SK-N-SH (cell line): ENCODE measurements at regions of chr6 and their contacts with region 1.

Region 1: DNA sequence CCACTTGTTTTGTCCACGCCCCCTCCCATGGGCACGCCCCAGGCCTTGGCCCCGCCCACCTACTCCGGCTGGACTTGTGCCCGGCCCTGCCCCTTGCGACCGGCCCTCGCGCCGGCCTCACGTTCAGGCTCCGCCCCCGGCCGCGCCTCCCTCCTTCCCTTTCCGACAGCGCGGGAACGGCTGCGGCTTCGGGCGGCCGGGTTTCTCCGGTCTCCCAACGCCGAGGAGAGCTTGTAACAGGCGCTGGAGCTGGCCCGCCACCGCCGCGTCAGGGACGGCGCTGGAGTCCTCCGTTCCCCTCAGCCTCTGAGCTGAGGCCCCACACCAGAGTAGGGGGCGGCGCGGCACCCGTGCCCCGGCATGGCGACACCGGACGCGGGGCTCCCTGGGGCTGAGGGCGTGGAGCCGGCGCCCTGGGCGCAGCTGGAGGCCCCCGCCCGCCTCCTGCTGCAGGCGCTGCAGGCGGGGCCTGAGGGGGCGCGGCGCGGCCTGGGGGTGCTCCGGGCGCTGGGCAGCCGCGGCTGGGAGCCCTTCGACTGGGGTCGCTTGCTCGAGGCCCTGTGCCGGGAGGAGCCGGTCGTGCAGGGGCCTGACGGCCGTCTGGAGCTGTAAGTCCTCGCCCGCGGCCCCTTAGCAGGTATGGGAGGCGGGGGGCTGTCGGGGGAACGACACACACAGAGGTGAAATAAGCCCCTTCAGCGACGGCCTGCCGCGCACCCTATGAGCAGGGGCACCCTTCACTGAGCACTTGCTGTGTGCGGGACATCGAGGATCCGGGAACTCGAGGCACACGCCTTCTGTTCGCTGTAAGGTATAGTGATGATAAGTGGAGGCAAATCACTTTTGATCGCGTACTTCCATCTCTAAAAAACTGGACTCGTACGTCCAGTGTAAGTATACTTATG is at the start of gene FANCE:
- DNase-seq: peak; percentile 98
- H3K4me3 ChIP-seq: peak within 1 kb of the TSS; percentile 64 to 70
- H3K27ac ChIP-seq: no peak within 1 kb of the TSS; a peak in 1 of 4 replicates
- H3K4me1 ChIP-seq: peaks cover 0 to 17% of the 10 kb centered on the region in 2 experiments; a peak in 2 of 4 replicates
- H3K27me3 ChIP-seq: no peaks in the 10 kb centered on the region
- CTCF ChIP-seq: no peak
- EP300 ChIP-seq: no peak
- RAD21 ChIP-seq: no peak
- polyA plus RNA-seq, gene FANCE: 5.8 and 6.5 TPM in 2 replicates

Region 2: GRCh38 chr6:35139908-35140655 is 312.4 kb before region 1 on chr6:
- CTCF ChIA-PET with region 1: no interaction called
- POLR2A ChIA-PET with region 1: no interaction called
- DNase-seq: peak; percentile 70
- H3K4me3 ChIP-seq: peak overlapping the region in 1 of 2 experiments; percentile 14; a peak in 1 of 4 replicates
- H3K27ac ChIP-seq: no peak overlapping the region
- H3K4me1 ChIP-seq: no peaks in the 10 kb centered on the region
- H3K27me3 ChIP-seq: no peaks in the 10 kb centered on the region
- CTCF ChIP-seq: peak; percentile 94
- EP300 ChIP-seq: no peak
- RAD21 ChIP-seq: peak; percentile 99

Region 3: GRCh38 chr6:35297601-35298481 is 154.6 kb before region 1 on chr6 and contains the start of gene DEF6:
- CTCF ChIA-PET with region 1: interaction called, 30 read pairs
- POLR2A ChIA-PET with region 1: no interaction called
- DNase-seq: peak; percentile 49
- H3K4me3 ChIP-seq: no peak within 1 kb of the TSS
- H3K27ac ChIP-seq: no peak within 1 kb of the TSS
- H3K4me1 ChIP-seq: peaks cover 0 to 4% of the 10 kb centered on the region in 2 experiments; a peak in 1 of 4 replicates
- H3K27me3 ChIP-seq: no peaks in the 10 kb centered on the region
- CTCF ChIP-seq: peak; percentile 24; the same call in 1 of the 2 replicates
- EP300 ChIP-seq: no peak
- RAD21 ChIP-seq: peak; percentile 53
- polyA plus RNA-seq, gene DEF6: 0.13 and 0.16 TPM in 2 replicates

Region 4: GRCh38 chr6:35327349-35328027 is 125.0 kb before region 1 on chr6:
- CTCF ChIA-PET with region 1: interaction called, 10 read pairs
- POLR2A ChIA-PET with region 1: no interaction called
- DNase-seq: peak; percentile 69
- H3K4me3 ChIP-seq: no peak overlapping the region
- H3K27ac ChIP-seq: no peak overlapping the region
- H3K4me1 ChIP-seq: no peaks in the 10 kb centered on the region; a peak in 1 of 4 replicates
- H3K27me3 ChIP-seq: no peaks in the 10 kb centered on the region; the same call in 1 of the 2 replicates
- CTCF ChIP-seq: peak; percentile 58
- EP300 ChIP-seq: no peak
- RAD21 ChIP-seq: peak; percentile 67

Region 5: GRCh38 chr6:35406711-35407485 is 45.5 kb before region 1 on chr6:
- CTCF ChIA-PET with region 1: interaction called, 12 read pairs
- POLR2A ChIA-PET with region 1: no interaction called
- DNase-seq: no peak
- H3K4me3 ChIP-seq: no peak overlapping the region
- H3K27ac ChIP-seq: no peak overlapping the region
- H3K4me1 ChIP-seq: peaks cover 0 to 14% of the 10 kb centered on the region in 2 experiments; a peak in 1 of 4 replicates
- H3K27me3 ChIP-seq: no peaks in the 10 kb centered on the region
- CTCF ChIP-seq: no peak
- EP300 ChIP-seq: no peak
- RAD21 ChIP-seq: no peak

Region 6: DNA sequence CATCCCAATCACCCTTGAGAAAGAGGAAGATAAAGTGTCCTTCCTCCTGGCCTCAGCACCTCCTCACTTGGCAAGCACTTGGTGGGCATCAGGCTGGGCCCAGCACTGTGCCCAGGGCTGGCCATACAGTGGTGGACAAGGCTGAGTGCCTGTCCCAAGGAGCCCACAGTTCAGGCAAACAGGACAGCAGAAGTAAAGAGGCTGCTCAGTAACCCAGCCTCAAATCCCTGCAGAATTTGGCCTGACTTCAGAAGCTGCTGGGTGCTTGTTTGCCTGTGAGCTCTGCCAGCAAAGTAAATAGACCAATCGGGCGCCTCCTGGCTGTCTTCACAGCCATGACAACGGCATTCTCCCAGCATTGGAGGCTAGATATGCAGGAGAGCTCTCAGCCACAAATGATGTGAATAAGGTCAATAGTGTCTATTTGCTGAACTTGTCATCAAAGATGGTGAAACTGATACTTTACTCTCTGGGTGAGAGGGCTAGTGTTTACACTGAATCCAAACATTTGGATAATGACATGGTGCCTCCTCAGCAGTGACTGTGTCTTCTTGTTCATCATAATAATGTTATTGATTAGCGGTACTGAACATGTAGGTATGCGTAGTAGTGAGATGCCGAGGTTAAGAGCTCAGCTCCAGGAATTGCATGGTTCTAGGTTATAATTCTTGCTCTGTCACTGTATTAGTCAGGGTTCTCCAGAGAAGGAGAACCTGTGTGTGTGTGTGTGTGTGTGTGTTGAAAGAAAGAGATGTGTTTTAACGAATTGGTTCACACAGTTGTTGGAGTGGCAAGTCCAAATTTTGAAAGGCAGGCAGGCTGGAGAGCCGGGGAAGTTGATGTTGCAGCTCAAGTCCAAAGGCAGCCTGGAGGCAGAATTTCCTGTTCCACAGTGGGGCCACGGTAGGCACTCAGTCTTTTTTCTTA is 37.1 kb before region 1 on chr6:
- CTCF ChIA-PET with region 1: interaction called, 46 read pairs
- POLR2A ChIA-PET with region 1: no interaction called
- DNase-seq: peak; percentile 63
- H3K4me3 ChIP-seq: no peak overlapping the region; a peak in 1 of 4 replicates
- H3K27ac ChIP-seq: peak overlapping the region in 1 of 2 experiments; percentile 36; a peak in 3 of 4 replicates
- H3K4me1 ChIP-seq: peaks cover 0 to 31% of the 10 kb centered on the region in 2 experiments; a peak in 2 of 4 replicates
- H3K27me3 ChIP-seq: no peaks in the 10 kb centered on the region
- CTCF ChIP-seq: peak; percentile 69
- EP300 ChIP-seq: no peak
- RAD21 ChIP-seq: peak; percentile 64

Region 7: DNA sequence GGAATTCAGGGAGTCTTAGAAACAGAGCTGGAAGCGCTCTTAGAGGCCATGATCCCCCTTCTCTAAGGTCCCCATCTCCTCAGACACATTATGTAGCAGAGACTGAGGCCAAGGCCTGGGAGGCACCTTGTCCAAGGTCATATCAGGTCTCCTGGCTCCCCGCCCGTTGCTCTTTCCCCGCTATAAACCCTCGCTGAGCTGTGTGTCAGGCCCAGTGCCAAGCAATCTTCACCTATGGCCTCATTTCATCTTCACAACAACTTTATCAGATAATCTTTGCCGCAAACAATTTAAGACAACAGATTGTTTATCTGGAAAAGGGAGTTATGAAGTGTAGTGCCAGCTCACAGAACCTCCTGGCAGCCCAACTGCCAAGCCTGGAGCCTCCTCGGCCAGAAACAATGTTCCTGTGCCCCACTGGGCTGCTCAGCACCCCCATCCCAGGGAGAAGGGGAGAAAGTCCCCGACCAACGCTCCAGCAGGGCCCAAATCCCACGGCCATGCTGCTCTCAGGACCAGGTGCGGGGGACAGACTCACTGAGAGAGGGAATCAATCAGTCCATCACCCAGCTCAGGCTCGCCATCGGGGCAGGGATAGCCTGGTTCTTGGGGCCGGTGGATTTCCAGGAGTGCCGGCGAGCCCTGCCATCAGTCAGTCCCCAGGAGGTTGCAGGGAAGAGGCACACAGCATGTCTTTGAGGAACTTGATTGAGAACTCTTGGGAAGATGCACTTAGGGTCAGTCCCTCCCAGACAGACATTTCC is 17.2 kb before region 1 on chr6:
- CTCF ChIA-PET with region 1: interaction called, 18 read pairs
- POLR2A ChIA-PET with region 1: no interaction called
- DNase-seq: no peak
- H3K4me3 ChIP-seq: no peak overlapping the region
- H3K27ac ChIP-seq: no peak overlapping the region
- H3K4me1 ChIP-seq: peaks cover 0 to 2% of the 10 kb centered on the region in 2 experiments; a peak in 1 of 4 replicates
- H3K27me3 ChIP-seq: no peaks in the 10 kb centered on the region
- CTCF ChIP-seq: no peak
- EP300 ChIP-seq: no peak
- RAD21 ChIP-seq: no peak

Region 8: DNA sequence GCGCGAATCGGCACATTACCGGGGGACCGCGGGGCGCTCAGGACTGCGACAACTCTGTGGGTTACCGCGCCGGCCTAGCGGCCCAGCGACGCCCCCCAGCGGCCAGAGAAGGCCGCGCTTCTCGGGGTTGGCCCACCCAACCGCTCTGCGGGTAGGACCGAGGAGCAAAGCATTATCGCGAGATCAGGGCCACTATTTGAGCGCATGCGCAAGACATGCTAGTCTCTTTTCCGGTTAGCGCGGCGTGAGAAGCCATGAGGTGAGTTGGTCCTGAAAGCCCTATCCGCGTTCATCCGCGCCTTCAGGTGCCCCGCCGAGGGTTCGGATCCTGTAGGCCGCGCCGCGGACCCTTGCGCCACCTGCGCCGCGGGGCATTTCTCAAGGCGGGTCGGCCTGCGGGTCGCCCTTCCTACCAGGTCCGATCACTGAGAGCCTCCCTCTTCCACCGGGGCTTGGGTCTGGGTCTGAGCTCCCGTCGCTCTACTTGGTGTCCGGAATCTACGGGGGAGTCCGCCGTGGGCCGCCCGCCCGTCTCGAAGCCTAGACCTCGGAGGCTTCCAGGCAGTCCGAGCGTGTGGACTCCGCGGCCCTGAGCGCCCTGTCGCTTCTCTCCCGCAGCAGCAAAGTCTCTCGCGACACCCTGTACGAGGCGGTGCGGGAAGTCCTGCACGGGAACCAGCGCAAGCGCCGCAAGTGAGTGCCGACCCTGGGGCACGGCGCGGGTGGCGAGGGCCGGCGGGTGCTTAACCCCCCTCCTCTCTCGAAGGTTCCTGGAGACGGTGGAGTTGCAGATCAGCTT is 15.9 kb after region 1 on chr6 and contains the start of gene RPL10A:
- CTCF ChIA-PET with region 1: interaction called, 102 read pairs
- POLR2A ChIA-PET with region 1: no interaction called
- DNase-seq: peak; percentile 97
- H3K4me3 ChIP-seq: peak within 1 kb of the TSS; percentile 67 to 90
- H3K27ac ChIP-seq: peak within 1 kb of the TSS; percentile 85 to 89
- H3K4me1 ChIP-seq: peaks cover 23 to 26% of the 10 kb centered on the region in 2 experiments; a peak in 3 of 4 replicates
- H3K27me3 ChIP-seq: no peaks in the 10 kb centered on the region
- CTCF ChIP-seq: peak; percentile 96
- EP300 ChIP-seq: no peak
- RAD21 ChIP-seq: peak; percentile 77
- polyA plus RNA-seq, gene RPL10A: 2,393 and 3,548 TPM in 2 replicates

Region 9: DNA sequence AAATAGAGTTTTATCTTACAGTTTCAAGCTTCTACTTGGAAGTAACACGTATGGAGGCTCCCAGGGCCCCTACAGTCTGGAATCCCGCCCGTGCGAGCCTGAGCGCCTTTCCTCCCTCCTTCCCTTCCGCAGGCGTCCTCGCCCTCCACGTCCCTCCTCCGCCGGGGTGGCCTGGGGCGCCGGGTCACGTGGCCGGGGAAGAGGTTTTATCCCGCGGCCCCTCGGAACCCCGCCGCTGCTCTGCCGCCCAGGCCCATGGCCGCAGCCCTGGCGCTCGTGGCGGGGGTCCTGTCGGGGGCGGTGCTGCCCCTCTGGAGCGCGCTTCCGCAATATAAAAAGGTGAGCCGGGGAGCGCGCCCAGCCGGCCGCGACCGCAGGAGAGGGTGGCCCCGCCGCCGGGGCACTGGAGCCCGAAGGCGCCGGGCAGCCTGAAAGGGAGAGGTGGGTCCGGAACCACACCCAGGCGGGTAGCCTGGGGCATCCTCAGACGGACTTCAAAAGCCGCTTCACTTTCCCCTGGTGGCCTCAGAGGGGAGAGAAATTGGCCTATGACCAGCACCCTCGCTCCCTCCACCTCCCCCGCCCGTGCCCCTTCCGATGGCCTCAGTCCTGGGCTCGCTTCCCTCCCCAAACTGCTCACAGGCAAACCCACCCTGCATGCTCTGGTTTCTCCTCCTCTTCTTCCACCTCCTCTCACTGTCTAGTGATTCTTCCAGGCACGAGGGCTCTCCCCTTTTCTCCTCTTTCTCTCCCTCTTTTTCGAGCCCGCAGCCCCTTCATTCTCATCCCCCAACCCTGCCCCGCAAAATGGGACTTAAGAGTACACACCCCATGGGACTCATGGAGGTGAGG is 324.2 kb after region 1 on chr6 and contains the start of gene CLPSL2:
- CTCF ChIA-PET with region 1: no interaction called
- POLR2A ChIA-PET with region 1: no interaction called
- DNase-seq: peak; percentile 82
- H3K4me3 ChIP-seq: peak within 1 kb of the TSS; percentile 48 to 54
- H3K27ac ChIP-seq: no peak within 1 kb of the TSS
- H3K4me1 ChIP-seq: no peaks in the 10 kb centered on the region; a peak in 1 of 4 replicates
- H3K27me3 ChIP-seq: peaks cover 12% of the 10 kb centered on the region; the same call in 1 of the 2 replicates
- CTCF ChIP-seq: no peak
- EP300 ChIP-seq: no peak
- RAD21 ChIP-seq: no peak
- polyA plus RNA-seq, gene CLPSL2: not detected in 2 replicates

Region 10: DNA sequence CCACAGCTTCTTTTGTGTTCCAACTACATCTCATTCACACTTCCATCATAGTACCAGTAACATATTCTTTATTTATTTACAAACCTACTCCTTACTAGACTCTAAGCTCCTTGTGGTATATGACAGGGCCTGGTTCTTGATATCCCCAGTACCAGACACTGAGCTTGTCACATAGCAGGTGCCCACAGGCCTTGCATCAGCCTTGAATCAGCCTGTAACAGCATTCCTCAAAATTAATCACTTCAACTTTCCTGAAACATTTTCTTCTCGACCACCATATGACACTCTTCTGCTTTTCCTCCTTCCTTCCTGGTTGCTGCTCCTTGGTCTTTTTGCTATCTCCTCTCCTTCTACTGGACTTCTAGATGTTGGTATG is 493.2 kb after region 1 on chr6:
- CTCF ChIA-PET with region 1: no interaction called
- POLR2A ChIA-PET with region 1: no interaction called
- DNase-seq: no peak
- H3K4me3 ChIP-seq: no peak overlapping the region
- H3K27ac ChIP-seq: no peak overlapping the region
- H3K4me1 ChIP-seq: no peaks in the 10 kb centered on the region
- H3K27me3 ChIP-seq: no peaks in the 10 kb centered on the region
- CTCF ChIP-seq: no peak
- EP300 ChIP-seq: no peak
- RAD21 ChIP-seq: no peak